Activated B cell treated with CpG ODN at 0.5 μM for 24 hours (primary cell): ENCODE measurements at regions of chr9 and their contacts with region 1.

Region 1: DNA sequence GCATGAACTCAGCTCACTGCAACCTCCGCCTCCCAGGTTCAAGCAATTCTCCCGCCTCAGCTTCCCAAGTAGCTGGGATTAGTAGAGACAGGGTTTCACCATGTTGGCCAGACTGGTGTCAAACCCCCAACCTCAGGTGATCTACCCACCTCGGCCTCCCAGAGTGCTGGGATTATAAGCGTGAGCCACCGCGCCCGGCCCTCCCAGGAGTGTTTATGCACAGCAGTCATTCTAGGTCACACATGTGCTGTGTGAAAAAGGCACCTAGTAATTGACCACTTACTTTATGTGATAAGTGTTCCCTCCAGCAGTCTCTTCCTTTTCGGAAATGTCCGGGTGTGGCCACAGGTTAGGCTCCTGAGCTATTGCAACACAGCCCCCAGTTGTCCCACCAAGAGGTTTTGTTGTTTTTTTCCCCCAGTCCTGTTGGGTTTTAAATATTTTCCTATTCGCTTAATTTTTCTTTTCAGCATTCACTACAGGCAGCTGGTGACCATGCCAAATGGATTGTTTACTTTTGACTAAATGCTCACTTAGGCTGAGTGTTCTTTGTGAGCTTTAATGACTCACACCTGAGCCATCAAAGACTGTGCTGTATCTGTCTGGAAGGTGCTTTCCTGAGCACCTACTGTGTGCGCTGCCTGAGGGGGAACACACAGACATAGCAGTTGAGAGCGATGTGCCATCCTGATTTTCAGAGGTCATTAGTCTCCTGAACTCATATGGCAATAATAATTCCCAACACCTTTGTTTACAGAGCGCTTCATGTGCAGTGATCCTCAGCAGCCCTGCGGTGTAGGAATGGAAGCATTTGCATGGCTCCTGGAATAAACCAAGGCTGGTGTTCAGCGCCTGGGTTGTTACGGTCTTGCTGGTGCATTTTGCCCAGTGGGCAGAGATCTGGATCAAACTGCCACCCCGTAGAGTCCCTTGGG is 94.3 kb downstream of the MVB12B start:
- DNase-seq: no peak
- ATAC-seq: no peak
- H3K4me3 Mint-ChIP-seq: no peak overlapping the region
- H3K27ac Mint-ChIP-seq: no peak overlapping the region
- H3K4me1 Mint-ChIP-seq: no peaks in the 10 kb centered on the region
- H3K27me3 Mint-ChIP-seq: no peaks in the 10 kb centered on the region
- CTCF ChIP-seq: no peak

Region 2: DNA sequence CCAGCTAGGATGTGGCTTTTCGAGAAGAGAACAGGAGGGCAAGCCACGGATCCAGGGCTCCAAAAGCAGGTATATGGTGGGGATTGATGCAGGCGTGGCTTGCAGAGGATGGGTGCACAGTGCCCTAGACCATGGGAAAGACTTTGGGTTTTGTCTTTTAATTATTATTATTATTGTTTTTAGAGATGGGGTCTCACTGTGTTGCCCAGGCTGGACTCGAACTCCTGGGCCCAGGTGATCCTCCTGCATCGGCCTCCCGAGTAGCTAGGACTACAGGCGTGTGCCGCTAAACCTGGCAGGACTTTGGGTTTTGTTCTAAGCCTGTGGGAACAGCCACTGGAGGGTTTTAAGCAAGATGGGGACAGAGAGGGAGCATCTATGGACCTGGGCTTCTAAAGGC is 1007.3 kb before region 1 on chr9:
- CTCF ChIA-PET with region 1: no interaction called
- POLR2A ChIA-PET with region 1: interaction called, 10 read pairs
- intact Hi-C with region 1: no loop called
- DNase-seq: no peak
- ATAC-seq: no peak
- H3K4me3 Mint-ChIP-seq: no peak overlapping the region
- H3K27ac Mint-ChIP-seq: no peak overlapping the region
- H3K4me1 Mint-ChIP-seq: peaks cover 8% of the 10 kb centered on the region
- H3K27me3 Mint-ChIP-seq: peaks cover 11% of the 10 kb centered on the region
- CTCF ChIP-seq: no peak